ENCODE measurements at regions of chr3 and their contacts with region 1.

Region 1: GRCh38 chr3:111577794-111578685 is 17.1 kb downstream of the ZBED2 start:
- DNase-seq: peak; percentile 44
- H3K4me3 ChIP-seq: no peak overlapping the region
- H3K27me3 ChIP-seq: no peaks in the 10 kb centered on the region
- CTCF ChIP-seq: peak; percentile 76

Region 2: DNA sequence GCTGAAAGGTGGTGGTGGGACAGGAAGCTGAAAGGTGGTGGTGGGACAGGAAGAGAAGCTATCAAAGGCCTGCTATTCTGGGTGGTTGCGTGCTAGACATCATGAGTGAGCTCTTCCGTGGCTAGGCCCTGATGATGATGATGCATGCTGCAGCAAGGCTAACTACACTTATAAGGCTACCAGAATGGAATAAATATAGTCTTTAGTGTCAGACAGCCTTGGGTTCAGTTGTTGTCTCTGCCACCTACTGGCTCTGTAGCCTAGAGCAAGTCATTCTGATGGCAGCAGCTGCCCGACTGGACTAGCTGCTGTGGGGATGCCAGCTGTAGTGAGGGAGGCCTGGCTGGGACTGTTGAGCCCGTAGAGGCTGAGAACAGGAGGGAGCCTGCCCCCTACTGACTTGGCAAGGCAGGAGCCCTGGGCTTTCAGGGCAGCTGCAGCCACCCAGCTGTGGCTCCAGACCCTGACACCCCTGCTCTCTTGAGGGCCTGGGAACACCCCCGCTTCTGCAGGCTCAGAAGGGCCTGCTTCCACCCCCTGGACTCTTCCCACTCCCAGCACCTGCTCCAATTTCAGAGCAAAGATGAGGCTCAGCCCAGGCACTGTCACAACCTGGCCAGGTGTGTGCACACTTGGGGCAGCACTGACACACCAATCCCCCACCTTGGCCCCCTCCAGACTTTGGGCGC is 38.5 kb after region 1 on chr3:
- CTCF ChIA-PET with region 1: interaction called, 17 read pairs
- POLR2A ChIA-PET with region 1: no interaction called
- DNase-seq: no peak
- H3K4me3 ChIP-seq: no peak overlapping the region
- H3K27me3 ChIP-seq: no peaks in the 10 kb centered on the region
- CTCF ChIP-seq: 0 out of 2 replicates have a peak, but pooled peaks have one; percentile 18

Region 3: GRCh38 chr3:111668912-111669488 is 91.0 kb after region 1 on chr3:
- CTCF ChIA-PET with region 1: interaction called, 38 read pairs
- POLR2A ChIA-PET with region 1: no interaction called
- DNase-seq: no peak
- H3K4me3 ChIP-seq: no peak overlapping the region
- H3K27me3 ChIP-seq: no peaks in the 10 kb centered on the region
- CTCF ChIP-seq: peak; percentile 75

Region 4: GRCh38 chr3:111691293-111691909 is 113.4 kb after region 1 on chr3:
- CTCF ChIA-PET with region 1: interaction called, 72 read pairs
- POLR2A ChIA-PET with region 1: interaction called, 3 read pairs
- DNase-seq: no peak
- H3K4me3 ChIP-seq: no peak overlapping the region
- H3K27me3 ChIP-seq: no peaks in the 10 kb centered on the region
- CTCF ChIP-seq: peak; percentile 64